MCF 10A (cell line): ENCODE measurements at regions of chr10 and their contacts with region 1.

Region 1: GRCh38 chr10:5014936-5015335 is 11.3 kb upstream of the AKR1C2 start:
- DNase-seq: peak; percentile 45
- H3K4me3 Mint-ChIP-seq: no peak overlapping the region
- H3K27ac Mint-ChIP-seq: no peak overlapping the region
- H3K4me1 Mint-ChIP-seq: peaks cover 28% of the 10 kb centered on the region
- H3K27me3 Mint-ChIP-seq: no peaks in the 10 kb centered on the region
- CTCF ChIP-seq: peak; percentile 30

Region 2: DNA sequence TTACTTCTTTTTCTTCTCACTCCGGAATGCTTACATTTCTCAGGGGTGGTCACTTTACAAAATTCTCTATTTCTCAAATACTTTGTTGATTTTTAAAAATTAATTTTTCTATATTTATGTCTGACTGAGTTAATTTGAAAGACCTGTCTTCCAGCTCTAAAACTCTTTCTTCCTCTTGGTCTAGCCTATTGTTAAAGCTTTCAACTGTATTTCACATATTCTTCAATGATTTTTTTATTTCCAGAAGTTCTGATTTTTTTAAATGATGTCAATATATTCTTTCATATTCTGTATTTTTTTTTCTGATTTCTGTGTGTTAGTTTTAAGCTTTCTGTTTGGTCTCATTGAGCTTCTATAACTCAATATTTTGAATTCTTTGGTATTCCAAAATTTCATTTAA is 16.1 kb after region 1 on chr10:
- CTCF ChIA-PET with region 1: no interaction called
- POLR2A ChIA-PET with region 1: no interaction called
- intact Hi-C with region 1: no loop called
- DNase-seq: no peak
- H3K4me3 Mint-ChIP-seq: no peak overlapping the region
- H3K27ac Mint-ChIP-seq: peak overlapping the region; percentile 17
- H3K4me1 Mint-ChIP-seq: peaks cover 23% of the 10 kb centered on the region
- H3K27me3 Mint-ChIP-seq: no peaks in the 10 kb centered on the region
- CTCF ChIP-seq: no peak

Region 3: GRCh38 chr10:5078547-5079180 is 63.7 kb after region 1 on chr10:
- CTCF ChIA-PET with region 1: no interaction called
- POLR2A ChIA-PET with region 1: no interaction called
- intact Hi-C with region 1: no loop called
- DNase-seq: peak; percentile 63
- H3K4me3 Mint-ChIP-seq: no peak overlapping the region
- H3K27ac Mint-ChIP-seq: no peak overlapping the region
- H3K4me1 Mint-ChIP-seq: peaks cover 15% of the 10 kb centered on the region
- H3K27me3 Mint-ChIP-seq: no peaks in the 10 kb centered on the region
- CTCF ChIP-seq: no peak

Region 4: GRCh38 chr10:5434017-5434753 is 419.2 kb after region 1 on chr10:
- CTCF ChIA-PET with region 1: no interaction called
- POLR2A ChIA-PET with region 1: no interaction called
- intact Hi-C with region 1: loop called (anchors 5 kb)
- DNase-seq: peak; percentile 64
- H3K4me3 Mint-ChIP-seq: peak overlapping the region; percentile 22
- H3K27ac Mint-ChIP-seq: peak overlapping the region; percentile 75
- H3K4me1 Mint-ChIP-seq: peaks cover 25% of the 10 kb centered on the region
- H3K27me3 Mint-ChIP-seq: no peaks in the 10 kb centered on the region
- CTCF ChIP-seq: peak; percentile 80